ENCODE measurements at regions of chr1 and their contacts with region 1.

Region 1: DNA sequence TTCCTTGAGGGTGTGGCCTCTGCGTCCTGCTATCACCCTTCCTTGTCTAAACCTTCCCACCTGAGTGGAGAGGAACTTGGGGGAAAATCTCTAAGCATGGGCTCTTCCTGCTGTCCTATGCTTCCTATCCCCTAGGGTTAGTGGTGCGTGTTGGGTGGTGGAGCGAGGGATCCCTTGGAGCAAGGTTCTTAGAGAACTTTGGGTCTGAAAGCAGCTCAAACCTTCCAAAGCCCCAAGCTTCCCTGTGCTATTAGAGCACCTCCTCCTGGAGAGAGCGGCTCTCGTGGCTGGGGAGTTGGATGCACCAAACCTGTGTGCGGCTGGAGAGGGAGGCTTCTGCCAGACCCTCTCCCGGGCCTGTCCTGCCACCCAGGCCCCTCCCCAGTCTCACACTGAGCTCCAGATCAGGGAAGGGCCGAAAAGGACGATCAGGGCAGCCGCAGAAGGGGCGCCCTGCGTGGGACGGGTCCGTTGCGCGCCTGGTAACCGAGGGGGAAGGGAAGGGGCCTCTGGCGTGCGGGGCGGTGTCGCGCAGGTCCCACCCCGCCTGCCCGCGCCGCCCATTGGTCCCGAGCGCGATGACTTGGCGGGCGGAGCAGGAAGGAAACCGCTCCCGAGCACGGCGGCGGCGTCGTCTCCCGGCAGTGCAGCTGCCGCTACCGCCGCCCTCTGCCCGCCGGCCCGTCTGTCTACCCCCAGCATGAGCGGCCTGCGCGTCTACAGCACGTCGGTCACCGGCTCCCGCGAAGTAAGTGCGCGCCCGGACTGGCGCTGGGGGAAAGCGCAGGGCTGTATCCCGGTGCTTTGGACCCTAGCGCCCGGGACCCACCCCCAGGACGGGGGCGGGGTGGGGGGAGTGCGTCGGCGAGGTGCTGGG is at the start of gene SH3BGRL3:
- DNase-seq: peak; percentile 90 to 94
- H3K4me3 ChIP-seq: peak within 1 kb of the TSS; percentile 74 to 88
- H3K27ac ChIP-seq: peak within 1 kb of the TSS; percentile 86 to 92
- H3K4me1 ChIP-seq: peaks cover 0 to 84% (median 71%) of the 10 kb centered on the region in 4 donors
- H3K27me3 ChIP-seq: no peaks in the 10 kb centered on the region
- CTCF ChIP-seq: peak in 1 of 2 experiments; percentile 19

Region 2: DNA sequence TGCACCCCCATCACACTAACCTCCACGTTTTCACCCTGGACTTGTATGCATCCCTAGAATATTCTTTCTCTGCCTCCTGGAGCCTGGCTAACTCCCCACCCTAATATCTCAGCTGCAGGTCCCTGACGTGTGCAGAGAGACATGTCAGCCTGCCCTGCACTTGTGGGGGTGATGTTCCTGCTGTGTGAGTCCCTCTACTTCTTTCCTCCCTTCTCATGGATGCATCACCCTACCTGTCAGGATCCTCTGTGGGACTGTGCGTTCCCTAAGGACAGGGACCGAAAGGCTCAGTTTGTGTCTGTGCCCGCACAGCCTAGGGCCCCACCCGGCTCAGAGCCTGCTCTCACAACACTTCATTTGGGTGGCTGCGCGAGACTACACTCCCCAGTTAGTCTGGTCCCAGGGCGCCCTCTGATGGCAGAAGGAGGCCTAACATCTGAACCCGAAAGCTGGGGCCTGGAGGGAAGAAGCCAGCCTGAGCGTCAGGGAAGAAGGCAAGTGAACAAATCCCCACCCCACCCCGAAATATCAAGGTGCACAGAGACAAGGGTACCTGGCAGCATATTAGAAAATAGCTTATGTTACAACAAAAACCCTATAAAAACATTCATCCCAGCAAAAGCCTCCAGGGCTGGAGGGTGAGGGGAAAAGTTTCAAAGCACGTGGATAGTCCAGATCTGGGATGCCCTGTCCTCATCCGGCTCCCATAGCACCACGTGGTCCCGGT is 41.8 kb after region 1 on chr1:
- intact Hi-C with region 1: loop called (anchors 2 kb)
- DNase-seq: peak; percentile 94 to 95
- H3K4me3 ChIP-seq: no peak overlapping the region
- H3K27ac ChIP-seq: no peak overlapping the region
- H3K4me1 ChIP-seq: peaks cover 0 to 6% (median 5%) of the 10 kb centered on the region in 4 donors
- H3K27me3 ChIP-seq: peaks cover 0 to 29% of the 10 kb centered on the region in 2 donors
- CTCF ChIP-seq: peak; percentile 88 to 95

Region 3: DNA sequence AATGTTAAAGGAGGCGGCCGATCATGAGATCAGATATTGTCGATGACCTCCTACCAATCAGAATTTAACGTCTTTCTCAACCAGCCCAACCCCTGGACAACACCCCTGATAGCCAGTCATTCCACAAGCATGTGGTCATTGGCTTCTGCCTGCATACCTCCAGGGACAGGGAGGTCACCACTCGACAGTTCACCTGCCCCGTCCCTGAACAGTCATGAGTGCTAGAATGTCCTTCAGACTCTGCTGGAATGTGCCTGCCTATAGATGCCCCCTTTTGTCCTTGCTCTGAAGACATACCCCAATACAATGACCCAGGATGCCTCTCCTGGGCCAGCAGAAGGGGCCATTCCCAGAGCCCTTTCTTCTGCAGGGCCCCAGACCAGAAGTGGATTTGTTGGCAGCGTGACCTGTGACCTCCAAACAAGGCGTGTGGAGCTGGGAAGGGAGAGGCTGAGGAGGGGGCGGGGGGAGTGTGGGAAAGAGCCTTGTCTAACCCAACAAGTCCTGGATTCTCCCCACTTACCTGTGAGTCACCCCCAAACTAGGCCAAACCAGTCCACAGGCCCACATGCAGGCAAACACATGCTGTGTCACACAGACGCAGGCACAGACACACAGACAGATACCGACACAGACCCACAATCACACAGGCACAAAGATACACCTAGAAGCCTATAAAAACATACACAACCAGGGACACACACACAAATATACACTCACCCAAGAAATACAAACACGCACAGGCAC is 72.1 kb after region 1 on chr1:
- intact Hi-C with region 1: no loop called
- DNase-seq: no peak
- H3K4me3 ChIP-seq: no peak overlapping the region
- H3K27ac ChIP-seq: no peak overlapping the region
- H3K4me1 ChIP-seq: no peaks in the 10 kb centered on the region
- H3K27me3 ChIP-seq: peaks cover 0 to 41% of the 10 kb centered on the region in 2 donors
- CTCF ChIP-seq: no peak

Region 4: DNA sequence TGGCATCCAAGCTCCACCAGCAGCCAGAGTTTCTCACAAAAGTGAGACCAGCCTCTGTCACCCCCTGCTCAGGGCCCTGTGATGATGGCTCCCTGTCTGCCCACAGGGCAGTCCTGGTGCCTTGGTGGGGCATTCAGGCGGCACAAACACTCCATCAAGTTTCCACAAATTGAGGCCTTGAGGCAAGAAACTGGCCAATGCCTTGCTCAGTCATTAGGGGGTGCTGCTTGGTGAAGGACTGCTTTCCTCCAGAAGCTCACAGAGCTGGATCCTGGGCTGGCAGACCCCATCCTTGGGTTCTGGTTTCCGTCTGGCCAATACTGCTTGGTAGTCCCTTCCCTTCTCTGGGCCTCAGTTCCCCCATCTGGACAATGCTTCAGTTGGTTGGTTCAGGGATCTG is 1336.7 kb after region 1 on chr1:
- intact Hi-C with region 1: loop called (anchors 5 kb)
- DNase-seq: no peak
- H3K4me3 ChIP-seq: no peak overlapping the region
- H3K27ac ChIP-seq: no peak overlapping the region
- H3K4me1 ChIP-seq: peaks cover 0 to 6% (median 0%) of the 10 kb centered on the region in 4 donors
- H3K27me3 ChIP-seq: peaks cover 0 to 19% of the 10 kb centered on the region in 2 donors
- CTCF ChIP-seq: no peak